ENCODE measurements at regions of chr6 and their contacts with region 1.

Region 1: GRCh38 chr6:27518881-27519795 is 46.2 kb upstream of the ZNF184 start:
- H3K4me3 ChIP-seq: peak overlapping the region; percentile 90
- H3K27ac ChIP-seq: peak overlapping the region; percentile 75
- H3K4me1 ChIP-seq: no peaks in the 10 kb centered on the region
- CTCF ChIP-seq: peak; percentile 52; the same call in 1 of the 2 replicates

Region 2: DNA sequence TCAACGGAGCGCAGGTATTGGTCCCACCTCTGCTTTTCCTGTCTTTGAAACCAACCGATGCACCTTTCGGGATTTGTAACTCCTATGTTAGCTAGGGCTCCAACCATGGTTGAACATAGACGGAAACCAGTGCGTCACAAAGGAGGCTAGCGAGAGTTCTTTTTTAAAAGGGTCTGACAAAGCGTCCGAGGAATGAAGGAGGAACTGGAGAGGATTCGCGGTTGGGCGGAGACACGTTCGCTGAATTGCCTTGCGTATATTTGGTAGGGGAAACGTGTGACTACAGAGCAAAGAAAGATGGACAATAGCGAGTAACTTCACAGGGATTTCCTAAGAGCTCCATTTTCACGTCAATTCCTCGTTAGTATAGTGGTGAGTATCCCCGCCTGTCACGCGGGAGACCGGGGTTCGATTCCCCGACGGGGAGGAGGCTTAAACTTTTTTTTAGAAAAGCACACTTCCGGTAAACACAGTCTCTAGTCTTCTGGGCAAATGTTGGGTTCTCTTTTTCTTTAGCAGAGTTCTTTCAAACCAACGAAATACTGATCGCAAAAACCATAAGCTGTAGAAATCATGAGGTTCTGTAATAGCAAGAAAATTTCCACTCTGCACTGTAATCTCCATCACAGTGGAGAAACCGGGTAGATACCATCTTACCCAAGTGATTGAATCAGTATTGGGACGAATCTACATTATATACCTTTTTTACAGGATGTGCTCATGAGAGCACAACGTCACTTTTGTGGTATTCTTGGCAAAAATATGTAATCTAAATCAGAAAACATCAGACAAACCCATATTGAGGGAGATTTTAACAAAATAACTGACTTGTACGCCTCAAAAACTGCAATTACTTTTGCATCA is 39.6 kb before region 1 on chr6:
- CTCF ChIA-PET with region 1: no interaction called
- POLR2A ChIA-PET with region 1: no interaction called
- H3K4me3 ChIP-seq: peak overlapping the region; percentile 66
- H3K27ac ChIP-seq: peak overlapping the region; percentile 9; the same call in 1 of the 2 replicates
- H3K4me1 ChIP-seq: no peaks in the 10 kb centered on the region
- CTCF ChIP-seq: no peak

Region 3: GRCh38 chr6:27503436-27504030 is 15.6 kb before region 1 on chr6:
- CTCF ChIA-PET with region 1: interaction called, 24 read pairs
- POLR2A ChIA-PET with region 1: no interaction called
- H3K4me3 ChIP-seq: peak overlapping the region; percentile 75
- H3K27ac ChIP-seq: peak overlapping the region; percentile 45; the same call in 1 of the 2 replicates
- H3K4me1 ChIP-seq: no peaks in the 10 kb centered on the region
- CTCF ChIP-seq: no peak

Region 4: DNA sequence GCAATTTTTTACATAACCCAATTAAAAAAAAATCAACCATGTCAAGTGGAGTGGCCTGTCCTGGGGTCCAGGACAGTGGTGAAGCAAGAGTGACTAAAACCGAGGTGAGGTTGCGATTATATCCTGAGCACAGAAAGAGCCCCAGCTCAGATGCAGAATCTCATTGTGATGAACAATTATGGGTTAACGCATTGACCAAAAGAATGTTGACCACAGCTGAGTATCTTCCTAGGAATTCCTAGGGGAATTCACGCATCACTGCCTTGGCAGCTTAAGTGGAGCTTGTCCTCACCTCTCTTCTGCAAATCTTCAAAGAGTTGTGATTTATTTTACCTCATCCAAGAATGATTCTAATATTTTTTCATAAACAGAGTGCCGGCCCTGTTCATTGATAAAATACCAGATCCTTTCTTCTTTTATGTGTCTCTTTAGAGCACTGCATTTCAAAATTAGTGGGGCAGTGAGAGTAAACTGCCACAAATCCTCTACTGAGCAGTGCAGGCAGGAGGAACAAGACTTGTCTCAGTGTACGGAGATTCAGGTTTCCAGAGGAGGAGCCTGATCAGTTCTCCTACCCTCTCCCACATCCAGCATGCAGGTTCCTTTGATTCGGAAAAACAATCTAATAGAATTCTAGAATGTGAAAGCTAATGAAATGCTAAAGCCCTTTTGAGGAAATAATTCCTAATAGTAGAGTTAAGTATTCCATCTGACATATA is 13.8 kb after region 1 on chr6:
- CTCF ChIA-PET with region 1: interaction called, 15 read pairs
- POLR2A ChIA-PET with region 1: interaction called, 6 read pairs
- H3K4me3 ChIP-seq: peak overlapping the region; percentile 7; the same call in 1 of the 2 replicates
- H3K27ac ChIP-seq: no peak overlapping the region
- H3K4me1 ChIP-seq: no peaks in the 10 kb centered on the region
- CTCF ChIP-seq: no peak

Region 5: GRCh38 chr6:27545271-27546046 is 26.3 kb after region 1 on chr6:
- CTCF ChIA-PET with region 1: interaction called, 11 read pairs
- POLR2A ChIA-PET with region 1: interaction called, 9 read pairs
- H3K4me3 ChIP-seq: peak overlapping the region; percentile 50
- H3K27ac ChIP-seq: peak overlapping the region; percentile 77
- H3K4me1 ChIP-seq: no peaks in the 10 kb centered on the region
- CTCF ChIP-seq: no peak